K562 (cell line): ENCODE measurements at regions of chr19 and their contacts with region 1.

Region 1: GRCh38 chr19:3700221-3701032 is at the start of gene PIP5K1C:
- DNase-seq: peak; percentile 93 to 97 (median 96)
- ATAC-seq: peak; percentile 93
- H3K4me3 ChIP-seq: peak within 1 kb of the TSS; percentile 85
- H3K27ac ChIP-seq: peak within 1 kb of the TSS; percentile 81
- H3K4me1 ChIP-seq: peaks cover 15 to 48% of the 10 kb centered on the region in 2 experiments
- H3K27me3 ChIP-seq: no peaks in the 10 kb centered on the region
- CTCF ChIP-seq: peak; percentile 84 to 90 (median 89)
- EP300 ChIP-seq: no peak
- POLR2A ChIP-seq: no peak
- RAD21 ChIP-seq: peak; percentile 80 to 92
- polyA plus RNA-seq, gene PIP5K1C: 0.38 to 0.61 TPM

Region 2: GRCh38 chr19:3289971-3290569 is 410.4 kb before region 1 on chr19:
- CTCF ChIA-PET with region 1: no interaction called
- POLR2A ChIA-PET with region 1: no interaction called
- in situ Hi-C with region 1: loop called (anchors 10 kb)
- intact Hi-C with region 1: no loop called
- DNase-seq: no peak
- ATAC-seq: no peak
- H3K4me3 ChIP-seq: no peak overlapping the region
- H3K27ac ChIP-seq: no peak overlapping the region
- H3K4me1 ChIP-seq: peaks cover 5 to 23% of the 10 kb centered on the region in 2 experiments; a peak in 4 of 5 replicates
- H3K27me3 ChIP-seq: peaks cover 11 to 26% of the 10 kb centered on the region in 2 experiments
- CTCF ChIP-seq: no peak
- EP300 ChIP-seq: no peak
- POLR2A ChIP-seq: no peak
- RAD21 ChIP-seq: no peak

Region 3: DNA sequence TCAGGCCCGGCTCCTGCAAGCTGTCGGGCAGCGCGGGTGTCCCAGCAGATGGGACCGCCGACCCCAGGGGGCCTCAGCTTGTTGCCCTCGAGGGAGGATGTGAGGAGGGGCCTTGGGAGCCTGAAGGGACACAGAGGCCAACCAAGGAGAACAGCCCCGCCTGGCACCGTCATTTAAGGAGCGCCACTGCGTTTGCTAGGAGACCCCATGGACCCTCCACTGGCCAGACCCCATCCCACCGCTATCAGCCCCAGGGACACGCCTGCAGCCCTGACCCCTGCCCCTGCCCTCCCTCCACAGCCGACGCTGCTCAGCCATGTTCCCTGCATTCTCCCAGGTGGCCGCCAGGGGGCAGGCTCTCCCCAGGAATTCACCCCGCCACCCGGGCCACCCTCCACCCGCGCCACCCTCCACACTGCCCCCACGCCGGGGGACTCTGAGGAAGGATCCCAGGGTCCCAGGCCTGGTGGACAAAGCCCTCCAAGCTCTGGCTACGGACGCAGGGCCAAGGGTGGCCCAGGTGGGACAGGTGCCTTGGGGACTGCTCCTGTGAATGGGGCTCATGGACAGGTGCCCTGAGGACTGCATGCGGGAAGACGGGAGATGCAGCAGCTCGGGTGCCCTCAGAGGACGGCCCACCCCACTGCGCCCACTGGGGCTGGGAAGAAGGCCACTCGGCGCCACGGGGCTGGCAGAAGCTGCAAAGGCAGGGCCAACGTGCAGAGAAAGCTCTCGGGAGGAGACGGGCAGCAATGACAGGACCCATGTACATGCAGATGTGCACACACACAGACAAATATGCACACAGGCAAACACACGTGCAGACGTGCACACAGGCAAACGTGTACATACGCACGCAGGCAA is 34.5 kb before region 1 on chr19:
- CTCF ChIA-PET with region 1: interaction called, 24 read pairs
- POLR2A ChIA-PET with region 1: interaction called, 4 read pairs
- in situ Hi-C with region 1: loop called (anchors 5 kb)
- intact Hi-C with region 1: loop called (anchors 2 kb)
- DNase-seq: peak; percentile 73 to 90 (median 87)
- ATAC-seq: peak; percentile 79
- H3K4me3 ChIP-seq: no peak overlapping the region
- H3K27ac ChIP-seq: no peak overlapping the region
- H3K4me1 ChIP-seq: peaks cover 16 to 67% of the 10 kb centered on the region in 2 experiments
- H3K27me3 ChIP-seq: no peaks in the 10 kb centered on the region
- CTCF ChIP-seq: peak; percentile 86 to 91 (median 87)
- EP300 ChIP-seq: no peak
- POLR2A ChIP-seq: no peak
- RAD21 ChIP-seq: peak; percentile 93

Region 4: DNA sequence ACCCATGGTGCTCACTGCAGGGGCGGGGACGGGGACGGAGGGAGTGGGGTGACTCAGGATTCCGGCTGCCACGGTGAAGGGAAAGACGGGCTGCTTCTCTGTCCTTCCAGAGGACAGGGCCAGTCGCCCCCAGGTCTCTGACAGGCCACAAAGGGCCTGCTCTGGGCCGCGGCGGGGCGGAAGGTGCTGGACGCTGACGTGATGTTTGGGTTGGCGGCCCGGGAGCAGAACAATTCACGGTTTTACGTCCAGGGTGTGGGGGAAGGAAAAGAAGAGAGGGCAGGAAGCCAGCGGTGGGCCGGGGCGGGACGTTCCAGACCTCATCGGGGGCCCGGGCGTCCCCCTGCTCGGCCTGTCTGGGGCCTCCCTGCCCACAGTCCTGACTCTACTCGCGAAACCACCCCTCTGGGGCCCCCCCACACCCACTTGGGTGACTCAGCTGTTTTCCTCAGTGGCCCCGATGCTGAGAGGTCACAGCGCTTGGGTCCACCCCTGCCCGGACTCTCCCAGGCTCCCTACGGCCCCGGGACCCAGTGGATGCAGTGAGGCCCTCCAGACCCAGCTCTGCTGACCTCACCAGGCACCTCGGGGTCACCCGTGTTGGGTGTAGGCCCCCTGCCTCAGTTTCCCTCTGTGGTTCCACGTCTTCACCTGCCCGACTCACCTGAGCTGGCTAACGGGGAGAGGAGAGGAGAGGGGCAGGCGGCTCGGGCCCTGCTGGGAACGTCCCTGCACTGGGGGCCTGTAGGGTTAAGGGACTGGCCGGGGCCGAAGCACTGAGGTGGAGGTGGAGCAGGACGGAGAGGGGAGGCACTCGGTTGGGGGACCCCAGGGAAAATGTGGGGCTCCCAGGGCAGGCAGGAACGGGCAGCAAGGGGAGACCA is 29.4 kb before region 1 on chr19:
- CTCF ChIA-PET with region 1: interaction called, 24 read pairs
- POLR2A ChIA-PET with region 1: interaction called, 8 read pairs
- in situ Hi-C with region 1: no loop called
- intact Hi-C with region 1: loop called (anchors 2 kb)
- DNase-seq: peak; percentile 83 to 89 (median 86)
- ATAC-seq: peak; percentile 74
- H3K4me3 ChIP-seq: peak overlapping the region; percentile 13
- H3K27ac ChIP-seq: peak overlapping the region; percentile 96
- H3K4me1 ChIP-seq: peaks cover 34 to 83% of the 10 kb centered on the region in 2 experiments
- H3K27me3 ChIP-seq: no peaks in the 10 kb centered on the region
- CTCF ChIP-seq: no peak
- EP300 ChIP-seq: no peak
- POLR2A ChIP-seq: peak; percentile 38; the same call in 1 of the 2 replicates
- RAD21 ChIP-seq: no peak

Region 5: DNA sequence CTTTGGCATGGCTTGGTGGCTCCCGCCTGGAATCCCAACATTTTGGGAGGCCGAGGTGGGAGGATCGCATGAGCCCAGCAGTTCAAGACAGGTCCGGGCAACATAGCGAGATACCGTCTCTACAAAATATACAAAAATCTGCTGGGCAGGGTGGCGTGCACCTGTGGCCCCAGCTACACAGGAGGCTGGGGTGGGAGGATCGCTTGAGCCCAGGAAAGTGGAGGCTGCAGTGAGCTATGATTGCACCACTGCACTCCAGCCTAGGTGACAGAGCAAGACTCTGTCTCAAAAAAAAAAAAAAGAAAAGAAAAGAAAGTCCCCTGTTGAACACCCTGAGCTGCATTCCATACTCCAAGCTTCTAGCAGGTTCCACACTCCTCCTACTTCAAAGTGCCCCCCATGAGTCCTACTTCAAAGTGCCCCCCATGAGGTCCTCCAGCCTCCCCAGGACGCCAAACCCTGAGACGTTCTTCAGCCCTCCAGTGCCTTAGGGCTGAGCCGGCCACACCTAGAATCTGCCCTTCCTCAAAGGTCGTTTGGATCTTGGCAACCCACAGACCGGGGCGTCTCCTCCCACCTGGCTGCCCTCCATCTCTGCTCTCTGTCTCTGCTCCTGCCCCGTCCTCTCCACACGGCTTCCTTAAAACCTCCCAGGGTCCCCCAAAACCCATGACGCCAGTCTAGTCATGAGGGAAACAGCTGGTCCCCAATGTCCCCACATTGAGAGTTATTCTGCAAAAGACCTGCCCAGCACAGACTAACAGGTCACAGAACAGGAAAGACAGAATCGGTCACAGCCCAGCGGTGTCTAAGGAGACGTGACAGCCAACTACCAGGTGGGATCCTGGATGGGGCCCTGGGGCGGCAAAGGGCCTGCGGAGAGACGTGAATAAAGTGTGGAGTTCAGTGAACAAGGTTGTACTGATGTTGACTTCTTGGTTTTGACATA is 12.5 kb after region 1 on chr19:
- CTCF ChIA-PET with region 1: no interaction called
- POLR2A ChIA-PET with region 1: no interaction called
- in situ Hi-C with region 1: no loop called
- intact Hi-C with region 1: no loop called
- DNase-seq: no peak
- ATAC-seq: peak; percentile 28; the same call in 2 of the 3 replicates
- H3K4me3 ChIP-seq: no peak overlapping the region
- H3K27ac ChIP-seq: no peak overlapping the region
- H3K4me1 ChIP-seq: peaks cover 9 to 34% of the 10 kb centered on the region in 2 experiments; a peak in 3 of 5 replicates
- H3K27me3 ChIP-seq: no peaks in the 10 kb centered on the region
- CTCF ChIP-seq: no peak
- EP300 ChIP-seq: no peak
- POLR2A ChIP-seq: no peak
- RAD21 ChIP-seq: no peak